Activated naive CD4-positive, alpha-beta T cell treated with anti-CD3 and anti-CD28 coated beads for 36 hours (primary cell): ENCODE measurements at regions of chr6 and their contacts with region 1.

Region 1: DNA sequence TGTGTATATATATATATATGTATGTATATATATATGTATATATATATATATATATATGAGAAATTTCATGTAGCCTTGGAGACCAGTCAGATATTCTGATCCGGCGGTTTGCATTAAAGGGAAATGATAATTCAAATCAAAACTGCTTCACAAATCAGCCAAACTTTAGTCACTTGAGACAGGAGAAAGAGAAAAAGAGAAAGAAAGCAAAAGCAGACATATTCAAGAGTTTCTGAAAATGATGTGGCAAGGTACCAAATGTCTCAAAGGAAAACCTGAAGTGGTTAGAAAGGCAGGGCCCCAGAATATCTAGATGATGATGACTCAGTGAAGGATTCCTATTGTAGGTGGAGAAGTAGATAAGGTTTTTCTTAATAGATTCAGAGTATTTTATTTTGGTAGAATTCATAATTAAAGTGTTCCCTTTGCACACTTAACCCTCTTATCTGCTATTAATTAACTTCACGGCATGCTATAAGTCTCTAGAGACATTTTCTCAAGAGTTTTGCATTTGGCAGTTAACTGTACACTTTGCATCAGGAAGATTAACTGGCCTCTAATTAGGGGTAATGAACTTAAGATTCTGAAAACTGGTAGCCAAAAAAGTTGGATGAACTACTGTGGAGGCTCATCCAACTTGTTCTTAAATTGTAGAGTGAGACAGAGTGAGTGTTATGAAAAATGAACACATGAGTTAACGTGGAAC is 50.1 kb upstream of the ASF1A start:
- DNase-seq: peak; percentile 50
- H3K4me3 Mint-ChIP-seq: no peak overlapping the region
- H3K27ac Mint-ChIP-seq: peak overlapping the region; percentile 2
- H3K4me1 Mint-ChIP-seq: peaks cover 23% of the 10 kb centered on the region
- H3K27me3 Mint-ChIP-seq: no peaks in the 10 kb centered on the region

Region 2: DNA sequence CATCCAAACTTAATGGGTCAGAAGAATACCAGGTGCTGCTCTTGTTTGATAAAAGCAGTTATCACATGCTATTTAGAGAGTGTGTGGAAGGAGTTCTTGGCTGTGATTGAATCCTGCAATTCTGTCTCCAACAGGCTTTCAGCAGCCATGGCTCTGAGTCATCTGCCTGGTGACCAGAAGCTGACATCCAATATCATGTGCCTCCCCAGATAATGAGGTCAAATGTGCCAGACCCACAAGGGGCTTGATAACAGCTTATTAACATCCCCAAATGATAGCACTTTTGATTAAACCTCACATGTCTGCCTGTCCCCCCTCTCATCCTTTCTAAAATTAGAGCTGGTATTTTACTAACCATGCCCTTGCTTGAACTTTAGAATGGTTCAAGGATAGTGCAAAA is 471.4 kb before region 1 on chr6:
- CTCF ChIA-PET with region 1: no interaction called
- intact Hi-C with region 1: no loop called
- DNase-seq: no peak
- H3K4me3 Mint-ChIP-seq: no peak overlapping the region
- H3K27ac Mint-ChIP-seq: no peak overlapping the region
- H3K4me1 Mint-ChIP-seq: peaks cover 2% of the 10 kb centered on the region
- H3K27me3 Mint-ChIP-seq: no peaks in the 10 kb centered on the region

Region 3: DNA sequence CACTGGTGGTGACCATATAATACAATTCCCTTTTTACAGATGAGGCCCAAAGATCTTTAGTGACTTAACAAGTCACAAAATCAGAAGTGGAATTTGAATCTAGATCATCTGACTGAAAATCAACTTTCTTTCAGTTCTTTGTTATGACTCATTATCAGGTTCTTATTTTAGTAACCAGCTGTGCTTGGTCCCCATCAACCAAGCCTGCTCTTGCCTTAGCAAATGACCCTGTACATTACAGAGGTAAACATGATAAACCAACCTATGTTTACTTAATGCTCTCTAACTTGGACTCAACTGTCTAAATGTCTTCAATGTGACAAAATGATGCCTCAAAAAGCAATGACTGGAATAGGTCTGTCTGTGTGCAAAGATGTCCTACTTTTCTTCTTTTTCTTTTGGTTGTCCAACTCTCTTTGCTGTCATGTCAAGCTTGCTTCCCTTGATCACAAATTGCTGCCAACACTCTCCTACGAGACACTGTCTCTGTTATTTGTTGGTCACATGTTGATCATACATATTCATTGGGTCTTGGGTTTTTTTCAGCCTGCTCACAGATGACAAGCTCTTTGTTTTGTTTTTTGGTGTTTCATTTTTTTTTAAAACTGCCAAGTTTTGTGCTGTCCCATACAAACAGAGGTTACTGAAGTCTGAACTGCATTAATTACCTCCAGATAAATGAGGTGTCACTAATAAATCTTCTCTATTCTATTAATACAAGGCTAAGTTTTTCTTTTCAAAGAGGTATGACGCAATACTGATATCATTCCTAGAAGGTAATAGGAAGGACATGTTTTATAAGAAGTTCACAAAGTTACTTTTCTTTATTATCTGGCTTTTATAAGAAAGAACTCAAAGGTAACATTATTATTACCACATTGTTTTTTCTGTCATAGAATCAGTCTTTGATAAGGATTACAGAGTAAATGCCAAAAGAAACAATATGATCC is 358.0 kb before region 1 on chr6:
- CTCF ChIA-PET with region 1: no interaction called
- intact Hi-C with region 1: loop called (anchors 5 kb)
- DNase-seq: peak; percentile 13
- H3K4me3 Mint-ChIP-seq: no peak overlapping the region
- H3K27ac Mint-ChIP-seq: no peak overlapping the region
- H3K4me1 Mint-ChIP-seq: peaks cover 27% of the 10 kb centered on the region
- H3K27me3 Mint-ChIP-seq: no peaks in the 10 kb centered on the region

Region 4: DNA sequence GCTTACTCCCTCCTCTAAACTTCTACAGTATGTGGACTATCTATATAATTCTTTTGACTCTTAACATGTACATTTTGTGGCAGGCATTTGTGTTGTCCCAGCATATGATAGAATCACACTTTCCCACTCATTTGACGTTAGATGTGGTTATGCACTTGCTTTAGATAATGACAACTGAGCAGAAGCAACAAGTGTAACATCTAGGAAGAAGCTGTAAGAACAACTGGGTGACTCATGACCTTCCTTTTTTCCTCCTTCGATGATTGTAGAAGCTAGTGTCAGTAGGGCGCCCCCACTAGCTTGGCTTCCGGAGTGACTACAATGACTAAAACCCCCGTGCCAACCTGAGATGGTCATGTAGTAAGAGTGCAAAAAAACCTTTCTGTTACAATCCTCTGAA is 117.9 kb before region 1 on chr6:
- CTCF ChIA-PET with region 1: no interaction called
- intact Hi-C with region 1: loop called (anchors 1 kb)
- DNase-seq: peak; percentile 93
- H3K4me3 Mint-ChIP-seq: peak overlapping the region; percentile 26
- H3K27ac Mint-ChIP-seq: peak overlapping the region; percentile 91
- H3K4me1 Mint-ChIP-seq: peaks cover 55% of the 10 kb centered on the region
- H3K27me3 Mint-ChIP-seq: no peaks in the 10 kb centered on the region

Region 5: GRCh38 chr6:118856301-118856700 is 12.5 kb after region 1 on chr6:
- CTCF ChIA-PET with region 1: interaction called, 3 read pairs
- intact Hi-C with region 1: loop called (anchors 1 kb)
- DNase-seq: no peak
- H3K4me3 Mint-ChIP-seq: no peak overlapping the region
- H3K27ac Mint-ChIP-seq: no peak overlapping the region
- H3K4me1 Mint-ChIP-seq: peaks cover 20% of the 10 kb centered on the region
- H3K27me3 Mint-ChIP-seq: no peaks in the 10 kb centered on the region

Region 6: DNA sequence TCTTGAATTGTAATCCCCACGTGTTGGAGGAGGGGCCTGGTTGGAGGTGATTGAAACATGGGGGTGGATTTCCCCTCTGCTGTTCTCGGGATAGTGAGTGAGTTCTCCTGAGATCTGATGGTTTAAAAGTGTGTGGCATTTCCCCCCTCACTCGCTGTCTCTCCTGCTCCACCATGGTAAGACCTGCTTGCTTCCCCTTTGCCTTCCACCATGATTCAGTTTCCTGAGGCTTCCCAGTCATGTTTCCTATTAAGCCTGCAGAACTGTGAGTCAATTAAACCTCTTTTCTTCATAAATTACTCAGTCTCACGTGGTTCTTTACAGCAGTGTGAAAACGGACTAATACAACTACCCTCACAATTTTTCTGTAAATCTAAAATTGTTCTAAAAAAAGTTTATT is 261.4 kb after region 1 on chr6:
- CTCF ChIA-PET with region 1: no interaction called
- intact Hi-C with region 1: loop called (anchors 5 kb)
- DNase-seq: peak; percentile 20
- H3K4me3 Mint-ChIP-seq: no peak overlapping the region
- H3K27ac Mint-ChIP-seq: peak overlapping the region; percentile 26
- H3K4me1 Mint-ChIP-seq: peaks cover 22% of the 10 kb centered on the region
- H3K27me3 Mint-ChIP-seq: no peaks in the 10 kb centered on the region

Region 7: GRCh38 chr6:119333707-119334295 is 490.0 kb after region 1 on chr6:
- CTCF ChIA-PET with region 1: no interaction called
- intact Hi-C with region 1: loop called (anchors 2 kb)
- DNase-seq: no peak
- H3K4me3 Mint-ChIP-seq: no peak overlapping the region
- H3K27ac Mint-ChIP-seq: no peak overlapping the region
- H3K4me1 Mint-ChIP-seq: peaks cover 19% of the 10 kb centered on the region
- H3K27me3 Mint-ChIP-seq: no peaks in the 10 kb centered on the region